Aorta (tissue), 5 donors: ENCODE measurements at regions of chrX and their contacts with region 1.

Region 1: GRCh38 chrX:114959729-114960128 is 57.7 kb downstream of the IL13RA2 start:
- DNase-seq: no peak
- ATAC-seq: no peak
- H3K4me3 ChIP-seq: no peak overlapping the region
- H3K27ac ChIP-seq: no peak overlapping the region
- H3K4me1 ChIP-seq: no peaks in the 10 kb centered on the region
- H3K27me3 ChIP-seq: no peaks in the 10 kb centered on the region

Region 2: DNA sequence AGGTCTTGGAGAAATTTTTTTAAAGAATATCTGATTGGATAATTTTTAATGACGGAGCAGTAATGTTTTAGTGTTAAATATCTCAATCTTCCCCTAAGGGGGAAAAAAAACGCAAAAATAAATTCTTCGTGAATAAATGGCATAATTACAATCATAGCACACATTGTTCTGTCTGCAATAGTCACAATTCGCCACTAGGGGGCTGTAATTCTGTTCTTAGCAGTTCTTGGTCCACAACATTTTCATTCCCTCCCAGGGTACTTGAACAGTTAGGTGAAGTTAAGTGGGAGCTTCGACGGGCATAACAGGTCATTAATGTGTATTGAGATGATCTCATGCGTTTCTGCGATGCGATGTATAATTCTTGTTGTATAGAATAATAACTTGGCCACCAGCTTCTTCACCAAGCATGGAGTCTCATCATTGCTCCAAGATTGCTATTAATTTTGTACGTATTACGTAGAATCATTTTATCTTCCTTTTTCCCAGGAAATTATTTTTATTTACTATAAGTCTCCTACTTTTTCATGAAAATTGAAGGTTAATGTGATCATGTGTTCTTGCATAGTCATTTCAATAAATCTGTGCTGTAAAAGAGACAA is 348.6 kb before region 1 on chrX:
- intact Hi-C with region 1: loop called in 1 of 2 experiments (anchors 5 kb)
- DNase-seq: no peak
- ATAC-seq: no peak
- H3K4me3 ChIP-seq: no peak overlapping the region
- H3K27ac ChIP-seq: no peak overlapping the region
- H3K4me1 ChIP-seq: no peaks in the 10 kb centered on the region
- H3K27me3 ChIP-seq: no peaks in the 10 kb centered on the region

Region 3: GRCh38 chrX:114626323-114626722 is 333.4 kb before region 1 on chrX:
- intact Hi-C with region 1: loop called in 1 of 2 experiments (anchors 5 kb)
- DNase-seq: no peak
- ATAC-seq: no peak
- H3K4me3 ChIP-seq: no peak overlapping the region
- H3K27ac ChIP-seq: no peak overlapping the region
- H3K4me1 ChIP-seq: no peaks in the 10 kb centered on the region
- H3K27me3 ChIP-seq: no peaks in the 10 kb centered on the region

Region 4: DNA sequence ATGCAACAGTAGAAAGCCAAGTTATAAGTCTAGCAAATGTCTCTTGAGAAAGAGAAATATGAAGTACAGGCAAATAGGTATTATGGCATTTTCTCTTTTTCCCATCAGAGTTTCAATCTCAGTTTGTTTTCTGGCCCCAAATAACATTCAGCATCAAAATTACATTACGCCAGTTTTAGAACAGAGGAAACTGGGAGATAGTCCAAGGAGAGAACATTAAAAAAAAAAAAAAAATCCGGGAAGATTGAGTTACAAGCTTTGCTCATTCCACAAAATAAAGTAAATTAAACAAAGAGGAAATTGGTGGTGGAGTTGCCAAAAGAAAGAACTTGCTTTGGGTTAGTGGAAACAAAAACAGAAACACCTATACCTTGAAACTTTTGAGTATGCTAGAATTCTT is 108.1 kb after region 1 on chrX:
- intact Hi-C with region 1: no loop called
- DNase-seq: no peak
- ATAC-seq: no peak
- H3K4me3 ChIP-seq: no peak overlapping the region
- H3K27ac ChIP-seq: peak overlapping the region in 1 of 2 donors; percentile 82
- H3K4me1 ChIP-seq: peaks cover 0 to 2% of the 10 kb centered on the region in 2 donors
- H3K27me3 ChIP-seq: no peaks in the 10 kb centered on the region